ENCODE measurements at regions of chr14 and their contacts with region 1.

Region 1: GRCh38 chr14:59126710-59127432 is 61.6 kb upstream of the DAAM1 start:
- DNase-seq: peak; percentile 39
- H3K4me3 ChIP-seq: no peak overlapping the region
- H3K27ac ChIP-seq: no peak overlapping the region
- H3K4me1 ChIP-seq: no peaks in the 10 kb centered on the region
- H3K27me3 ChIP-seq: no peaks in the 10 kb centered on the region
- CTCF ChIP-seq: peak; percentile 58 to 68

Region 2: GRCh38 chr14:58501214-58501816 is 625.6 kb before region 1 on chr14:
- CTCF ChIA-PET with region 1: no interaction called
- dilution Hi-C with region 1: no loop called
- in situ Hi-C with region 1: no loop called
- intact Hi-C with region 1: loop called (anchors 2 kb)
- DNase-seq: peak; percentile 38
- H3K4me3 ChIP-seq: no peak overlapping the region
- H3K27ac ChIP-seq: no peak overlapping the region
- H3K4me1 ChIP-seq: no peaks in the 10 kb centered on the region
- H3K27me3 ChIP-seq: no peaks in the 10 kb centered on the region
- CTCF ChIP-seq: peak; percentile 84 to 86

Region 3: DNA sequence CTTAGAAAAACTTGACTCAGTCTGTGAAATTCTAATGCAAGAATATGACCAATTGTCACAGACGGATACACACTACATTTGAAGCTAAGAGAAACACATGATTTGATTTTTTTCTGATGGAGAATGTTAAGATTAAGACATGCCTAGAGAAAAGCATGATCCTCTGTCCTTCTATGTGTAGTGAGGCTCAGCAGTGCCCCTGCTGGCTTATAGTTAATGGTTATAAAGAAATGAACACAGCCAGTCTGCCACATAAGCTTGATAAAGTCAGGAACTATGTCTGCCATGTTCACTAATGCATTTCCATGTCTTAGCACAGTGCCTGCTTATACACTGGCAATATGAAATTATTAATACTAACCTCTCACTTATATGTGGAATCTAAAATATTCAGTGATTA is 106.5 kb before region 1 on chr14:
- CTCF ChIA-PET with region 1: interaction called, 4 read pairs
- dilution Hi-C with region 1: loop called (anchors 5 kb)
- in situ Hi-C with region 1: no loop called
- intact Hi-C with region 1: no loop called
- DNase-seq: peak; percentile 20
- H3K4me3 ChIP-seq: no peak overlapping the region
- H3K27ac ChIP-seq: no peak overlapping the region
- H3K4me1 ChIP-seq: no peaks in the 10 kb centered on the region
- H3K27me3 ChIP-seq: no peaks in the 10 kb centered on the region
- CTCF ChIP-seq: peak; percentile 58 to 60

Region 4: GRCh38 chr14:59044707-59045106 is 82.2 kb before region 1 on chr14:
- CTCF ChIA-PET with region 1: no interaction called
- dilution Hi-C with region 1: no loop called
- in situ Hi-C with region 1: no loop called
- intact Hi-C with region 1: no loop called
- DNase-seq: no peak
- H3K4me3 ChIP-seq: no peak overlapping the region
- H3K27ac ChIP-seq: no peak overlapping the region
- H3K4me1 ChIP-seq: no peaks in the 10 kb centered on the region
- H3K27me3 ChIP-seq: no peaks in the 10 kb centered on the region
- CTCF ChIP-seq: no peak

Region 5: GRCh38 chr14:59055439-59056045 is 71.3 kb before region 1 on chr14:
- CTCF ChIA-PET with region 1: no interaction called
- dilution Hi-C with region 1: no loop called
- in situ Hi-C with region 1: no loop called
- intact Hi-C with region 1: loop called (anchors 1 kb)
- DNase-seq: peak; percentile 31
- H3K4me3 ChIP-seq: no peak overlapping the region
- H3K27ac ChIP-seq: no peak overlapping the region
- H3K4me1 ChIP-seq: no peaks in the 10 kb centered on the region
- H3K27me3 ChIP-seq: no peaks in the 10 kb centered on the region
- CTCF ChIP-seq: peak; percentile 70 to 84

Region 6: DNA sequence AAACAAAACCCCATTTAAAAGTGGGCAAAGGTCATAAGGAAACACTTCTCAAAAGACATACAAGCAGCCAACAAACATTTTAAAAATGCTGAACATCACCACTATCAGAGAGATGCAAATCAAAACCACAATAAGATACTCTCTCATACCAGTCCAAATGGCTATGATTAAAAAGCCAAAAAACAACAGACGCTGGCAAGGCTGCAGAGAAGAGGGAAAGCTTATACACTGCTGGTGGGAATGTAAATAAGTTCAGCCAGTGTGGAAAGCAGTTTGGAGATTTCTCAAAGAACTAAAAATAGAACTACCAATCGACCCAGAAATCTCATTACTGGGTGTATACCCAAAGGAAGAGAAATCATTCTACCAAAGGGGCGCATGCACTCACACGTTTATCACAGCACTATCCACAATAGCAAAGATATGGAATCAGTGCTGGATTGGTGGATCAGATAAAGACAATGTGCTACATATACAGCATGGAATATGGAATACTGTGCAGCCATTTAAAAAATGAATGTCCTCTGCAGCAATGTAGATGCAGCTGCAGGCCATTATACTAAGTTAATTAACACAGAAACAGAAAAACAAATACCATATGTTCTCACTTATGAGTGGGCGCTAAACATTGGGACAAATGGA is 40.5 kb before region 1 on chr14:
- CTCF ChIA-PET with region 1: no interaction called
- dilution Hi-C with region 1: no loop called
- in situ Hi-C with region 1: no loop called
- intact Hi-C with region 1: no loop called
- DNase-seq: no peak
- H3K4me3 ChIP-seq: no peak overlapping the region
- H3K27ac ChIP-seq: no peak overlapping the region
- H3K4me1 ChIP-seq: no peaks in the 10 kb centered on the region
- H3K27me3 ChIP-seq: no peaks in the 10 kb centered on the region
- CTCF ChIP-seq: no peak

Region 7: DNA sequence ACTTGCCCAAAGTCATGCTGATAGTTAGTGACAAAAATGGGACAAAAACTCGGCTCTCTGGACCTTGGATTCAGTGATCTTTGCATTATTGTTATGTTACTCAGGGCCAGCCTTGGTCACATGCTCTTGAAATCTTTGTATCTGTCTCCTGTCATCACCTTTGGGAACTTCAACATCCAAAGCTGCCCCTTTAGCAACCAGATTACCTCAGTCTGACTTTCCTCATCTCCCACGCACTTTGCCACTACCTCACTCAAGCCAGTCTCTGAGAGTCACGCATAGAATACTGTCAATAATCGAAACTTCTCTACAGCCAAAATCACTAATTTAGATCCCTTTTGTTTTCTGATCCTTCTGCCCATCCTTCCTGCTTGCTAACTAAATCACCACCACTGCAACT is 29.2 kb before region 1 on chr14:
- CTCF ChIA-PET with region 1: no interaction called
- dilution Hi-C with region 1: no loop called
- in situ Hi-C with region 1: no loop called
- intact Hi-C with region 1: no loop called
- DNase-seq: no peak
- H3K4me3 ChIP-seq: no peak overlapping the region
- H3K27ac ChIP-seq: no peak overlapping the region
- H3K4me1 ChIP-seq: peaks cover 8% of the 10 kb centered on the region
- H3K27me3 ChIP-seq: no peaks in the 10 kb centered on the region
- CTCF ChIP-seq: no peak

Region 8: GRCh38 chr14:59313658-59314608 is 187.1 kb after region 1 on chr14:
- CTCF ChIA-PET with region 1: no interaction called
- dilution Hi-C with region 1: no loop called
- in situ Hi-C with region 1: no loop called
- intact Hi-C with region 1: loop called (anchors 2 kb)
- DNase-seq: no peak
- H3K4me3 ChIP-seq: no peak overlapping the region
- H3K27ac ChIP-seq: no peak overlapping the region
- H3K4me1 ChIP-seq: no peaks in the 10 kb centered on the region
- H3K27me3 ChIP-seq: no peaks in the 10 kb centered on the region
- CTCF ChIP-seq: no peak

Region 9: GRCh38 chr14:59438195-59438647 is 311.4 kb after region 1 on chr14:
- CTCF ChIA-PET with region 1: no interaction called
- dilution Hi-C with region 1: no loop called
- in situ Hi-C with region 1: loop called (anchors 5 kb)
- intact Hi-C with region 1: loop called (anchors 1 kb)
- DNase-seq: peak; percentile 74
- H3K4me3 ChIP-seq: no peak overlapping the region
- H3K27ac ChIP-seq: no peak overlapping the region
- H3K4me1 ChIP-seq: peaks cover 16% of the 10 kb centered on the region
- H3K27me3 ChIP-seq: no peaks in the 10 kb centered on the region
- CTCF ChIP-seq: no peak

Region 10: DNA sequence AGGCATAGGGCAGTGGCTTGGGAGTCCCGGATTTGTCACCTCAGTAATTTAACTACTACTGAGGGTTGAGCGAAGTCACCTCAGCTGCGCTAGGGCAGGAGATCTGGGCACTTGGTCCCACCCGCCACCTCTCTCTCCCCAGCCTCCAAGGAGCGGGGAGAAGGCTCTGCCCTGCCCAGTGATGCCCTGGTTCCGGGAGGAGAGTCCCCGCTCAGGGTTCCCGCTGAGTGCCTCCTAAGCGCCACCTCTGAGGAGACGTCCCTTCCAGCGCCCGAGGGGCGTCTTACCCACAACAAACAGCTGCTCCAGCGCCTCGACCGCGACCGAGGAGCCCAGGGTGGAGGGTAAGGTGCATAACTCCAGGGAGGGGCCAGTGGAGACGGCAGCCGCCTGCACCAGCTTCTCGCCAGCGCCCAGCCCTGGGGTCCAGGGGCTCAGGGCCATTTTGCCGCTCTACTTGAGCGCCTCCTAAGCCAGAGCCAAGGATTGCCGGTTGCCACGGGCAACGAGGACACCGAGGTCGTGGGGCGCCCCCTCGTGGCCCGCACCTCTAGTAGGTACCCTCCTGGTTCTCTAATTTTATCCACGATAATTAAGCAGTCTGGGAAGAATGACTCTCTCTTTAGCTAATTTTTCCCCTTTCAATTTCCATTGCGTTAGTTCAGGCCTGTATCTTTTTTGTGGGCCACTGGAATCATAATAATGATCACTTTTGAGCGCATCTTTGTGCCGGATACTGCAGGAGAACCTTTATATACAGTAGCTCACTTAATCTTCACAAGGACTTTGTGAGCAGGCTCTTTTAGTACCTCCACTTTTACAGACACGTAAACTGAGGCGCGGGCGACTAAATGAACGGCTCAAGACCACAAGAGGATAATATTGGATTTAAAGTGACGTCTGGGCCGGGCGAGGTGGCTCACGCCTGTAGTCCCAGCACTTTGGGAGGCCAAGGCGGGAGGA is 449.7 kb after region 1 on chr14 and contains the start of gene CCDC175:
- CTCF ChIA-PET with region 1: no interaction called
- dilution Hi-C with region 1: no loop called
- in situ Hi-C with region 1: no loop called
- intact Hi-C with region 1: loop called (anchors 1 kb)
- DNase-seq: peak; percentile 46
- H3K4me3 ChIP-seq: peak within 1 kb of the TSS in 1 of 3 experiments; percentile 16
- H3K27ac ChIP-seq: no peak within 1 kb of the TSS
- H3K4me1 ChIP-seq: peaks cover 5% of the 10 kb centered on the region
- H3K27me3 ChIP-seq: peaks cover 4% of the 10 kb centered on the region
- CTCF ChIP-seq: peak; percentile 62 to 74
- total RNA-seq, gene CCDC175: not detected